CD8-positive, alpha-beta T cell (primary cell): ENCODE measurements at regions of chr2 and their contacts with region 1.

Region 1: GRCh38 chr2:16362611-16363010 is 303.0 kb downstream of the CYRIA start:
- DNase-seq: no peak
- ATAC-seq: no peak
- H3K4me3 ChIP-seq: no peak overlapping the region
- H3K4me3 Mint-ChIP-seq: no peak overlapping the region
- H3K27ac ChIP-seq: no peak overlapping the region
- H3K27ac Mint-ChIP-seq: no peak overlapping the region
- H3K4me1 ChIP-seq: no peaks in the 10 kb centered on the region
- H3K4me1 Mint-ChIP-seq: no peaks in the 10 kb centered on the region
- H3K27me3 ChIP-seq: no peaks in the 10 kb centered on the region
- H3K27me3 Mint-ChIP-seq: no peaks in the 10 kb centered on the region
- CTCF ChIP-seq: no peak

Region 2: GRCh38 chr2:16322308-16323125 is 40.1 kb before region 1 on chr2:
- CTCF ChIA-PET with region 1: no interaction called
- POLR2A ChIA-PET with region 1: no interaction called
- intact Hi-C with region 1: loop called in 1 of 2 experiments (anchors 1 kb)
- DNase-seq: no peak
- ATAC-seq: no peak
- H3K4me3 ChIP-seq: no peak overlapping the region
- H3K4me3 Mint-ChIP-seq: no peak overlapping the region
- H3K27ac ChIP-seq: no peak overlapping the region
- H3K27ac Mint-ChIP-seq: no peak overlapping the region
- H3K4me1 ChIP-seq: no peaks in the 10 kb centered on the region
- H3K4me1 Mint-ChIP-seq: no peaks in the 10 kb centered on the region
- H3K27me3 ChIP-seq: no peaks in the 10 kb centered on the region
- H3K27me3 Mint-ChIP-seq: no peaks in the 10 kb centered on the region
- CTCF ChIP-seq: no peak

Region 3: GRCh38 chr2:16400127-16400623 is 37.6 kb after region 1 on chr2:
- CTCF ChIA-PET with region 1: no interaction called
- POLR2A ChIA-PET with region 1: no interaction called
- intact Hi-C with region 1: no loop called
- DNase-seq: no peak
- ATAC-seq: no peak
- H3K4me3 ChIP-seq: no peak overlapping the region
- H3K4me3 Mint-ChIP-seq: no peak overlapping the region
- H3K27ac ChIP-seq: no peak overlapping the region
- H3K27ac Mint-ChIP-seq: no peak overlapping the region
- H3K4me1 ChIP-seq: no peaks in the 10 kb centered on the region
- H3K4me1 Mint-ChIP-seq: no peaks in the 10 kb centered on the region
- H3K27me3 ChIP-seq: peaks cover 0 to 2% of the 10 kb centered on the region in 2 experiments
- H3K27me3 Mint-ChIP-seq: no peaks in the 10 kb centered on the region
- CTCF ChIP-seq: no peak